ENCODE measurements at regions of chrX and their contacts with region 1.

Region 1: GRCh38 chrX:13387666-13388494 is 68.0 kb upstream of the ATXN3L start:
- DNase-seq: no peak
- ATAC-seq: peak; percentile 58
- H3K4me3 ChIP-seq: no peak overlapping the region
- H3K4me3 Mint-ChIP-seq: no peak overlapping the region
- H3K27ac ChIP-seq: no peak overlapping the region
- H3K27ac Mint-ChIP-seq: no peak overlapping the region
- H3K4me1 ChIP-seq: no peaks in the 10 kb centered on the region
- H3K4me1 Mint-ChIP-seq: peaks cover 0 to 4% (median 0%) of the 10 kb centered on the region in 7 donors
- H3K27me3 ChIP-seq: no peaks in the 10 kb centered on the region
- H3K27me3 Mint-ChIP-seq: no peaks in the 10 kb centered on the region

Region 2: DNA sequence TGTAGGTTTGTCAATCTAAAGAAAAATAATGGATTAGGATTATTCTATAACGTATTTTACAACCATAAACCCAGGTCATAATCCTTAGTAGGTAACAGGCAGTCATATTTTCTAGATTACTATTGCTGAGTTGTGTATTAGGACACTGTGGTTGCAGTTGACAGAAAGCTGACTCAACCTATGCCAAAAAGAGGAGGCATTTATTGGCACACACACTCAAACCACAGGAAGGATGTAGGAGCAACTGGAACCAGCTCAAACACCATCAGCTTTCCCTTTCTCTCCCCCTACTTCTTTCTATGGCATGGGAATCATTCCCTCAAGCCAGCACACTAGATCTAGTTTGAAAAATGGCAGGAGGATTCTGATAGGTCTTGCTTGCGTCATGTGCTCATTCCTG is 207.1 kb before region 1 on chrX:
- CTCF ChIA-PET with region 1: no interaction called
- POLR2A ChIA-PET with region 1: no interaction called
- intact Hi-C with region 1: no loop called
- DNase-seq: no peak
- ATAC-seq: no peak
- H3K4me3 ChIP-seq: no peak overlapping the region
- H3K4me3 Mint-ChIP-seq: no peak overlapping the region
- H3K27ac ChIP-seq: no peak overlapping the region
- H3K27ac Mint-ChIP-seq: peak overlapping the region in 1 of 9 donors; percentile 52
- H3K4me1 ChIP-seq: peaks cover 0 to 10% of the 10 kb centered on the region in 2 donors
- H3K4me1 Mint-ChIP-seq: peaks cover 0 to 11% (median 10%) of the 10 kb centered on the region in 7 donors
- H3K27me3 ChIP-seq: no peaks in the 10 kb centered on the region
- H3K27me3 Mint-ChIP-seq: no peaks in the 10 kb centered on the region

Region 3: DNA sequence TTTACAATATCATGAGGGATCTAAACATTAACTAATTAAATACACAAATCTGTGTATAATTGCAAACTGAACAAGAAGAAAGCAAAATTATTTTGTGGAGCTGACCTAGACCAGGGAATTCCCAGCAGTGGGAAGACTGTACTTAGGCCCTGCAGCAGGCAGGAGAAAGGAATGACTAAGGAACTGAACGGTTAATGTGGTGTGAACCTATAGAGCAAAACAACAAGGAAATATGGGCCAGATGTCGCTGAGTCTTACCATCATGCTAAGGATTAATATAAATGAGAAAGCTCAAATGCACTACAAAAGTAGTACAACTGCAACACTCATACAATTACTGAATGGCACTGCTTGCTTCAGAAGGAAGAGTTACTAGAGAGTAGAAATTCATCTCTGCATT is 52.3 kb after region 1 on chrX:
- CTCF ChIA-PET with region 1: no interaction called
- POLR2A ChIA-PET with region 1: interaction called, 6 read pairs
- intact Hi-C with region 1: loop called in 1 of 2 experiments (anchors 10 kb)
- DNase-seq: no peak
- ATAC-seq: no peak
- H3K4me3 ChIP-seq: no peak overlapping the region
- H3K4me3 Mint-ChIP-seq: no peak overlapping the region
- H3K27ac ChIP-seq: no peak overlapping the region
- H3K27ac Mint-ChIP-seq: no peak overlapping the region
- H3K4me1 ChIP-seq: no peaks in the 10 kb centered on the region
- H3K4me1 Mint-ChIP-seq: peaks cover 0 to 8% (median 0%) of the 10 kb centered on the region in 7 donors
- H3K27me3 ChIP-seq: no peaks in the 10 kb centered on the region
- H3K27me3 Mint-ChIP-seq: no peaks in the 10 kb centered on the region

Region 4: DNA sequence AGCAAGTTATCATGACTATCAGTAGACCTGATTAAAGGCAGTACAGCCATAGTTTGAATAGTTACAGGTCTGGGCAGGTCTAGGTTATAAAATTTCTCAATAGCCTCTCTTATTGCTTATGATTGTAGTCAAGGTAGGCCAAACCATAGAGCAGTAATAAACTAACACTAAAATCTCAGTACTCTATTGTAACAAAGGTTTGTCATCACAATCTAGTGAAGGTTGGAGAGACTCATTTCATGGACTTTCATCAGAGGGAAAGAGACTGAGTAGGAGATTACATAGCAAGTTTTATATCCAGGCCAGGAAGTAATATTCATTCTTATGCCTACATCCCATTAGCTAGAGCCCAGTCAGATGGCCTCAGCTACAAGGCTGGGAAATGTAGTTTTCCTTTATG is 1741.0 kb after region 1 on chrX:
- CTCF ChIA-PET with region 1: no interaction called
- POLR2A ChIA-PET with region 1: no interaction called
- intact Hi-C with region 1: no loop called
- DNase-seq: no peak
- ATAC-seq: no peak
- H3K4me3 ChIP-seq: no peak overlapping the region
- H3K4me3 Mint-ChIP-seq: no peak overlapping the region
- H3K27ac ChIP-seq: no peak overlapping the region
- H3K27ac Mint-ChIP-seq: no peak overlapping the region
- H3K4me1 ChIP-seq: no peaks in the 10 kb centered on the region
- H3K4me1 Mint-ChIP-seq: no peaks in the 10 kb centered on the region
- H3K27me3 ChIP-seq: no peaks in the 10 kb centered on the region
- H3K27me3 Mint-ChIP-seq: peaks cover 0 to 5% (median 0%) of the 10 kb centered on the region in 5 donors